ENCODE measurements at regions of chr7 and their contacts with region 1.

Region 1: GRCh38 chr7:92768501-92769393 is 67.6 kb downstream of the CDK6 start:
- DNase-seq: no peak
- H3K4me3 ChIP-seq: no peak overlapping the region
- H3K27ac ChIP-seq: peak overlapping the region in 1 of 2 experiments; percentile 72
- H3K4me1 ChIP-seq: peaks cover 19 to 56% (median 45%) of the 10 kb centered on the region in 4 experiments
- H3K27me3 ChIP-seq: no peaks in the 10 kb centered on the region

Region 2: GRCh38 chr7:92740700-92741126 is 28.0 kb before region 1 on chr7:
- CTCF ChIA-PET with region 1: no interaction called
- POLR2A ChIA-PET with region 1: no interaction called
- DNase-seq: no peak
- H3K4me3 ChIP-seq: no peak overlapping the region
- H3K27ac ChIP-seq: peak overlapping the region in 1 of 2 experiments; percentile 31
- H3K4me1 ChIP-seq: peaks cover 5 to 44% (median 21%) of the 10 kb centered on the region in 4 experiments
- H3K27me3 ChIP-seq: no peaks in the 10 kb centered on the region

Region 3: DNA sequence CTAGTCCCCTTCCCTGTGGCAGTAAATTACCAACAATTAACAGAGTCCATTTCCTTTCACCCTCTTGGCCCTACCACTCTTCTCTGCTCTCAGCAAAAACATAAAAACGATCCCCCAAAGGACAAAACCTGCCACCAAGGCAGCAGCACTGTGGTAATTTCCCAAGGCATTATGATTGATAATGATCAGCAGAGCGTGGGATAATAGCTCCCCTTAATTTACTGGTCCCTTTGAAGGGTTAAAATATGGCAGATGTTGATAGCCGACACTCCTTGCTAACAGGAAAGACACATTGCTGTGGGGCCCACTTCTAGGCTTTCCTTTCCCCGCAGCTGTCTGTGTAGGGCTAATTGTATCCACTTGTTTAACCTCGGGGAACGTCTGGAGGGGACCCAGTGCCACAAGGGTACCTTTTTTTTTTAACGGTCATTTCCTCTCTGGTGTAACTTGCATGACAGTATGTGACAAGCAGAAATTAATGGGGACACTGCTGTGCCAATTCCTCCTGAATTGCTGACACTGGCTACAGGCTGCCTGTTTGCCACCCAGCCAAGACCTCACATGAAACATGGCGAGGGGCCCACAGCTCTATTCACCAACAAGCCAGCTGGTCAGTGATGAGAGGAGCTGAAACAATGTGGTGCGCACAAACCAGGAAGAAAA is 13.7 kb before region 1 on chr7:
- CTCF ChIA-PET with region 1: interaction called, 51 read pairs
- POLR2A ChIA-PET with region 1: interaction called, 14 read pairs
- DNase-seq: peak; percentile 88 to 99 (median 98)
- H3K4me3 ChIP-seq: peak overlapping the region in 6 of 7 experiments; percentile 17 to 52 (median 26)
- H3K27ac ChIP-seq: peak overlapping the region; percentile 93 to 97
- H3K4me1 ChIP-seq: peaks cover 39 to 86% (median 58%) of the 10 kb centered on the region in 4 experiments
- H3K27me3 ChIP-seq: no peaks in the 10 kb centered on the region